Right ventricle myocardium inferior (tissue), 1 donor: ENCODE measurements at regions of chr3 and their contacts with region 1.

Region 1: DNA sequence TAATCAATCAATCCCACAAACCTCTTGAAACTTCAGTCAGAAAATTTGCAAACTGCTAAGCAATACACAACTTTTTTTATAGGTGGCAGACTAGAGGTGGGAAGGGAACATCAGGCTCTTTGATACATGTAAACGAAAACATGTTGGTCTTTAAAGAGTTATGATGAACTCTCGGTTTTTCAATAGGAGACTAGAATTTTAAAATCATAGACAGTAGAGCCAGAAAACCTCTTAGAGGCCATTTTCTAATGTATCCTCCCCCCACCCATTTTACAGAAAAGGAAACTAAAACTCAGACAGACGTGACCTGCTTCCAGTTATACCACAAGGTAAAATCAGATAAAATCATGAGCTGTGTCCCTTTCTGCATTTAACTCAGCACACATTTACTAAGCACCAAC is 179.1 kb upstream of the LPP start:
- DNase-seq: no peak
- ATAC-seq: no peak

Region 2: DNA sequence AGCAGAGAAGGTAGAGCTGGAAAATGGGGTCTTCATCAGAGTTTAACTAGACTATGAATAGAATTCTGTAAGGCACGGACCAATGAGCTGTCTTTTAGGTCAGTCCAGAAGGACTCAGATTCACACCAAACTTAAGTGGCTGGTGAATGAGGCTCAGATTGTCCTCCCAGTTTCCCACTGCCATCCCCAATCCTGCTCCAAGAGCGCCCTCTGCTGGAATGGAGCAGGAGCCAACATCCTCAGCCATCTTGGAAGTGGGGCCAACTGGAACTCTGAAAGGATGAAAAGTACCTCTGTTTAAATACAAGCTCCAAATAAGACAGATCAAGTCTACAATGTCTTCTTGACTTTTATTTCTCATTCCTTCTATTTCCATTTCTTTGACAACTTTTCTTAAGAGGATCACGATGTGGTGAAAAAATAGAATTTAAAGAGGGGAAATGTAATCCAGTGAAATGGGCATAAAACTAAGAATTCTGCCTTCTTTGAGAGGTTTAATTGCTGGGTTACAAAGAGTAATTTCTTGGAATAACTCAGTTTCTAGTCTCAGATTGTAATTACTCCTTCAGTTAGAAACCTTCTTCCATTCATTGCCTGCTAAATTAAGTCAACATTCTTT is 979.8 kb after region 1 on chr3:
- intact Hi-C with region 1: loop called (anchors 10 kb)
- DNase-seq: peak; percentile 82
- ATAC-seq: peak; percentile 82